Adrenal gland (tissue), 19 donors: ENCODE measurements at regions of chr6 and their contacts with region 1.

Region 1: DNA sequence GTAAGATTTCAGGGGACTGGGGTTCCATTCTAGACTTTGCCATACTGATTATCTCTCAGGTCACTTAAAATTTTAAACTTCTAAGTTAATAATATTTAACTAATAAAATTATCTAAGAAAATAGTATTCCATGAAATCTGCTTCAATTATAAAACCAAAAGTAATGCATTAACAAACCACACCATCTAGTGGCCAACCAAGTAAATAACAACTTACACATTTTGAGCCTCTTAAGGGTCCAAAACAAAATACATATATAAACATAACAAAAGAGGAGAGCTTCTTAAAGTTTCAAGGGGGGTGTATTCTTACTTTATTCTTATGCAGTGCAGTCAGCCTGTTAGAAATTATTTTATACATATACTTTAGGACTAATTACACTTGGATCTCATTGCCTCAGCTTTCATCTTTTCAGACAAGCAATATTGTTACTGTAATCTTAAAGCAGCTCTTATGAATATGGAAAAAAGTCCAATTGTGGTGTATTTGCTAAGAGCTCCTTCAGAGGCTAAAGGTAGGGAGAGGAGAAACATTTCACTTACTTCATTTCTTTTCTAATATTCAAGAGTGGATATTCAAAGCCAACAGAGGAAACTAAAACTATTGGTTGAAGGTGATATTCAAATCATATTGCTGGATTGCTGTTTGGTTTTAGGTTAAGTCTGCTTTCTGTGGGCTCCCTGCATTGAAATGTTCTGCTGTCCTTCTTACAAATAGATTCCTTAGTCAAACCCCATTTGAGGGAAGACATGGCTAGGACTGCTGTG is 199.7 kb upstream of the SIM1 start:
- DNase-seq: no peak
- H3K4me3 ChIP-seq: no peak overlapping the region
- H3K27ac ChIP-seq: no peak overlapping the region
- H3K4me1 ChIP-seq: no peaks in the 10 kb centered on the region
- H3K27me3 ChIP-seq: no peaks in the 10 kb centered on the region
- CTCF ChIP-seq: peak; percentile 45 to 79 (median 62)
- POLR2A ChIP-seq: no peak

Region 2: DNA sequence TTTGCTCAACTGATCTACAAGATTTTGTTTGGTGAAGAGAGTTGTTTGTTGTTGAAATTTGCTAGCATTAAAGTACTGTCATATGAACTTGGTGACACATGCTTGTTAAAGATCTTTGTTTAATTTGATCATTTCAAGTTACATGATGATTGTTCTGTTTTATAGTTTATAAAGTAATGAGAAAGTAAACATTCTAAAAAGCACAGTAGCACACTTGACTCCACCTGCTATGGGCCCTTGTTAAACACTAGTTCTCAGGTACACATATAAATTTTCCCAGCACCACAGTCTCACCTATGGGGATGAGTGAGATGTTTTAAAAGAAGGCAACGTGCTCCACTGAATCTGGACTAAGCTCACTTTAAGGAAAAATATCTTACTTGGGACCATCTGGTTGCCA is 684.5 kb before region 1 on chr6:
- intact Hi-C with region 1: no loop called
- DNase-seq: no peak
- H3K4me3 ChIP-seq: no peak overlapping the region
- H3K27ac ChIP-seq: no peak overlapping the region
- H3K4me1 ChIP-seq: no peaks in the 10 kb centered on the region
- H3K27me3 ChIP-seq: no peaks in the 10 kb centered on the region
- CTCF ChIP-seq: no peak
- POLR2A ChIP-seq: no peak

Region 3: GRCh38 chr6:100116411-100117194 is 547.9 kb before region 1 on chr6:
- intact Hi-C with region 1: loop called in 1 of 2 experiments (anchors 10 kb)
- DNase-seq: peak; percentile 14 to 72 (median 32)
- H3K4me3 ChIP-seq: no peak overlapping the region
- H3K27ac ChIP-seq: no peak overlapping the region
- H3K4me1 ChIP-seq: no peaks in the 10 kb centered on the region
- H3K27me3 ChIP-seq: peaks cover 4% of the 10 kb centered on the region
- CTCF ChIP-seq: peak; percentile 31 to 69 (median 50)
- POLR2A ChIP-seq: no peak

Region 4: DNA sequence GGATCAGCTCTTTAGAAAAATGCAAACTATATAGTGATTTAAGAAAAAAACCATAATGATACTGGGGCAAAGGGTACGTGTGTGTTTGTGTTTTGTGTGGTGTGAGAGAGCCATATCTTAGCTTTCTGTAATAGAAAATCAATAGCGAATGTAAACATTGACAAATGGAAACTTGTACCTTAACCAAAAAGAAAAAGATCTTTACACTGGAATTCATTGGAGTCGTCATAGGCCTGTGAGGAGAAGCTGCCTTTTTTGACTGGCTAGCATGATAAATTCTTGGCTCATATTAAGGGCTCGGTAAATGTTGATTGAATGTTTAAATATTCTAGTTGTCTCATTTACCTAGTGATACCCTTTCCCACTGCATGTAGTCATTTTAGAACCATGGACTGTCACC is 378.5 kb after region 1 on chr6:
- intact Hi-C with region 1: no loop called
- DNase-seq: no peak
- H3K4me3 ChIP-seq: no peak overlapping the region
- H3K27ac ChIP-seq: no peak overlapping the region
- H3K4me1 ChIP-seq: no peaks in the 10 kb centered on the region
- H3K27me3 ChIP-seq: no peaks in the 10 kb centered on the region
- CTCF ChIP-seq: no peak
- POLR2A ChIP-seq: no peak